ENCODE measurements at regions of chr17 and their contacts with region 1.

Region 1: DNA sequence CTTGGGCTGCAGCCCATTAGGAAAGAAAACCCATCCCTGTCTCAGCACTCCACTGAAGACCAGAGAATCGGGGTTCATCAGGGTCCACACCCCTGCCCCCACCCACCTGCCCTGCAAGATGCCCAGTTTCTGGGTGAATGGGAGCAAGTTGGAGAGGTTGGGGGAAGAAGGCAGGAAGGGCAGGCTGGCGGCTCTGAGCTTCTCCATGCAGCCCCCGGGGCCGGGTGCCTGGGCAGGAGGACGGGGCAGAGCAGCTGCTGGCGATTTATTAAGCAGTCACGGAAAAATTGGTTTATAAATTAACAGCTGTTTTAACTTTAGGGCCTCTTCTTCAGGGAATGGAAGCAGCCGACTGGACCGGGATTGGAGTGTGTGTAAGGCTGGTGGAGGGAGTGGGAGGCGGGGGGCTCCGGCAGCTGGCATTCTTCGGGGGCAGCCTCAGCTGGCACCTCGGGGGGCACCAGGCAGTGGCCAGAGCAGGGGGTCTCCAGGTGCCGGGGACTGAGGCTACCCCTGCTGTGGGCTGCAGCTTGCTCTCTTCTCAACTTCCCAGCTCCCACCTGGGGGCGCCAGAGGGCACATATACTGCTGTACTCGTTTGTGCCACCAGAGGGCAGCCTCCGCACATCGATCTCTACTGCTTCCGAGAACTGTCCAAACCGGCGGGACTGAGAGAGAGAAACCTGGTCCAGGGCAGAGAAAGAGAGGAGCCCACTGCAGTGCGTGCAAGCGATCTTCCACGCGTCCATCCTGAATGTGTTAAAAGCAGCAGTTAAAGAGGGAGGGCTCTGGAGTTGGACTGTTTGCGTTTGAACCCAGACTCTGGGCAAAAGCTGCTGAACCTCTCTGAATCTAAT is 5.0 kb upstream of the PPP1R1B start:
- DNase-seq: no peak
- H3K4me3 ChIP-seq: no peak overlapping the region
- H3K27me3 ChIP-seq: peaks cover 22% of the 10 kb centered on the region
- CTCF ChIP-seq: peak; percentile 100

Region 2: GRCh38 chr17:39538866-39539265 is 82.9 kb before region 1 on chr17:
- CTCF ChIA-PET with region 1: interaction called, 193 read pairs
- POLR2A ChIA-PET with region 1: no interaction called
- DNase-seq: no peak
- H3K4me3 ChIP-seq: no peak overlapping the region
- H3K27me3 ChIP-seq: no peaks in the 10 kb centered on the region
- CTCF ChIP-seq: no peak

Region 3: DNA sequence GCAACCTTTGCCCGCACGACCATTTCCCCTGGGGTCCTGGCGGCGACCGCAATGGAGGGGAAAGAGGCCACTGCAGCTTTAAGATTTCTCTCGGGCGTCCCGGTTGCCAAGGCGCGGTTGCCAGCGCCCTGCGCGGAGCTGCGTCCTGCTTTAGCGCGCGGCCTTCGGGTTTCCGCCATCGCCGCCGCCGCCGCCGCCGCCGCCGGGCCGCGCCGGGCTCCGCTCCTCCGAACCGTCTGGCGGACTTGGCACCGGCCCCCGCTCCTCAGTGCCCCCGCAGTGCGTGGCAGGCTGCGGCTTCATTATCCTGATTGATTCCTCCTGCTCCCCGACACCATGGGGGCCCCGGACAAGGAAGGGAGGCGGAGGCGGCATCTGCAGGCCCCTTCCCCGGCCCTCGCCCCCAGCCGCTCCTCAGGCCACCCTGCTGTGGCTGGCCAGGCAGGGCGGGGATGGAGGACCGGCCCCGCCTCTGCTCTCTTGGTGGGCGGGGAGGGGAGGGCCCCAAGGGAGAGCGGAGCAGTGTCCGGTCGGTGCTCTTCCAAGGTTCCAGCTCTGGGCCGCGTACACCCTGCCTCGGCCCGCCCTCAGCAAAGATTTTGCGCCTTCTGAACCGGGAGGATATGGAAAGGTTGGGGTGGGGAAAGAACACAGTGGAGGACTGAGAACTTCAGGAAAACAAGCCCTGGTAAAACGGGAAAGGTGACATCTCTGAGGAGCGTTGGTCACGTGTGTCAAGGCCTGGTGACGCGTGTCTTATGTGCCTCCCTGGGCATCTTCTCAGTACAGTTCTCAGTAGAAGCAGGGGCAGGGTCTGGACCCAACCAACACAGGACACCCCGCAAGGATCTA is 48.1 kb before region 1 on chr17:
- CTCF ChIA-PET with region 1: interaction called, 13 read pairs
- POLR2A ChIA-PET with region 1: no interaction called
- DNase-seq: peak; percentile 29
- H3K4me3 ChIP-seq: peak overlapping the region; percentile 64
- H3K27me3 ChIP-seq: 0 out of 2 replicates have a peak, but pooled peaks cover 2% of the 10 kb centered on the region
- CTCF ChIP-seq: no peak

Region 4: GRCh38 chr17:39605492-39606433 is 16.0 kb before region 1 on chr17:
- CTCF ChIA-PET with region 1: interaction called, 35 read pairs
- POLR2A ChIA-PET with region 1: no interaction called
- DNase-seq: no peak
- H3K4me3 ChIP-seq: no peak overlapping the region
- H3K27me3 ChIP-seq: peaks cover 69% of the 10 kb centered on the region
- CTCF ChIP-seq: no peak

Region 5: GRCh38 chr17:39668199-39668966 is 46.6 kb after region 1 on chr17 and contains the start of gene PNMT:
- CTCF ChIA-PET with region 1: interaction called, 185 read pairs
- POLR2A ChIA-PET with region 1: no interaction called
- DNase-seq: no peak
- H3K4me3 ChIP-seq: no peak within 1 kb of the TSS
- H3K27me3 ChIP-seq: peaks cover 19% of the 10 kb centered on the region
- CTCF ChIP-seq: peak; percentile 66
- polyA plus RNA-seq, gene PNMT: not detected in 2 replicates

Region 6: DNA sequence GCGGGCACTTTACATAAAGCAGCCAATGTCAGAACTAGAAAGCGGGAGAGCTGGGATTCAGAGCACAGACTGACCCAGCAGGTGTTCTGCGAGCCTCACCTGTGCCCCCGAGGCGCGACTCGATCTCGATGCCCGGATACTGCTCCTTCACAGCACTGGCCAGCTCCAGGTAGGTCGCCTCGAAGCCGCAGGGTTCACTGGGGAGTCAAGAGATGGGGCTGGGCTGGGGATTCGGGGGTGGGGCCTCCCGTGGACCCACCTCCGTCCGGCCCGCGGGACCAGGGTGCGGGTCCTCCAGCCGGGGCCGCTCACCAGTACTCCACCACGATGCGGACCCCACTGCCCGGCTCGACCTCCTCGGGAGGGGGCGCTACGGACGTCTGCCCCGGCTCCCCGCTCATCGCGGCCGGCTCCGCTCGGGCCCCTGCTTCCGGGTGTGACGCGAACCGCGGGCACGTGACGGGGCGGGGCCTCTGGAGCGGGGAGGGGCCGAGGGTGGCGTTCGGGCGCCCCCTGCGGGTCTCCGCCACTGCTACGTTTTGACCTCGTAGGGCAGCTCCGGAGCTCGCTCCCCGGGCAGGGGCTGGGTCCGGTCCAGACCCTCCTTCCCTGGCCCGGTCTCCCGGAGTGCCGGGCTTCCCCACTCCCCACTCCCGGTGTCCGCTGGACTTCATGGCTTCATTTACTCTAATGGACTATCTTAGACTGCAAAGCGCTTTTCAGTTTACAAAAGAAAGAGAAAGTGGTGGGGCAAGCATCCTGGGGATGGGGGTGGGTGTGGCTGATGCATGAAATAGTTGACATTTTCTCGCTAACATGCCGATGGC is 108.6 kb after region 1 on chr17 and contains the start of gene MIEN1:
- CTCF ChIA-PET with region 1: interaction called, 12 read pairs
- POLR2A ChIA-PET with region 1: no interaction called
- DNase-seq: no peak
- H3K4me3 ChIP-seq: peak within 1 kb of the TSS; percentile 89
- H3K27me3 ChIP-seq: peaks cover 1% of the 10 kb centered on the region; the same call in 1 of the 2 replicates
- CTCF ChIP-seq: peak; percentile 84
- polyA plus RNA-seq, gene MIEN1: 61.4 and 78.9 TPM in 2 replicates

Region 7: GRCh38 chr17:39769974-39770587 is 148.3 kb after region 1 on chr17:
- CTCF ChIA-PET with region 1: interaction called, 10 read pairs
- POLR2A ChIA-PET with region 1: no interaction called
- DNase-seq: peak; percentile 72
- H3K4me3 ChIP-seq: no peak overlapping the region
- H3K27me3 ChIP-seq: peaks cover 35% of the 10 kb centered on the region
- CTCF ChIP-seq: no peak

Measured in BJ (cell line).